ENCODE measurements at regions of chr12 and their contacts with region 1.

Region 1: GRCh38 chr12:124130717-124131670 is 158.0 kb downstream of the ZNF664 start:
- DNase-seq: no peak
- ATAC-seq: no peak
- H3K4me3 ChIP-seq: no peak overlapping the region
- H3K27ac ChIP-seq: no peak overlapping the region
- H3K4me1 ChIP-seq: no peaks in the 10 kb centered on the region
- H3K27me3 ChIP-seq: peaks cover 17% of the 10 kb centered on the region
- CTCF ChIP-seq: no peak
- POLR2A ChIP-seq: no peak
- RAD21 ChIP-seq: no peak

Region 2: DNA sequence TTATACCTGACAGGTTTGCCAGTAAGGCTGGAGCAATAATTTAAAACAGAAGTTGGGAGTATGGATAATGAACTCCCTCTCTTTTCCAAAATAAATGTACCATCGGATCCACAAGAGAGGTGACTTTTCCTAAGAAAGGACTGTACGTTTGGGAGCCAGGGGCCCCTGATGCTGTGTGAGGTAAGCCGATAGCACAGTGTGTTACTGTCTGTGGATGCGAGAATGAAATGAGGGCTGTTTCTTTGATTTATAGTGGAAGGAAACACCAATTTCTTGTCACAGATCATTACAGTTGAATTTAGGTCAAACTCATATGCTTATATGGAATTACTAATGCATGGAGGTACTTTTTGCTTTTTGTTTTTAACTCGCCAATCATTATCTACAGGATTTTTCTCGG is 10.3 kb before region 1 on chr12:
- CTCF ChIA-PET with region 1: interaction called, 12 read pairs
- POLR2A ChIA-PET with region 1: no interaction called
- dilution Hi-C with region 1: no loop called
- in situ Hi-C with region 1: no loop called
- intact Hi-C with region 1: no loop called
- DNase-seq: no peak
- ATAC-seq: no peak
- H3K4me3 ChIP-seq: no peak overlapping the region
- H3K27ac ChIP-seq: no peak overlapping the region
- H3K4me1 ChIP-seq: no peaks in the 10 kb centered on the region
- H3K27me3 ChIP-seq: peaks cover 31% of the 10 kb centered on the region
- CTCF ChIP-seq: no peak
- POLR2A ChIP-seq: no peak
- RAD21 ChIP-seq: no peak